ENCODE measurements at regions of chr19 and their contacts with region 1.

Region 1: GRCh38 chr19:51338563-51339312 is 3.2 kb downstream of the VSIG10L start:
- DNase-seq: peak; percentile 90
- ATAC-seq: peak; percentile 72 to 82

Region 2: GRCh38 chr19:51367565-51368365 is 29.0 kb after region 1 on chr19:
- intact Hi-C with region 1: loop called in 1 of 2 experiments (anchors 2 kb)
- DNase-seq: peak; percentile 99
- ATAC-seq: peak; percentile 91 to 93

Region 3: GRCh38 chr19:51393959-51394836 is 55.5 kb after region 1 on chr19:
- intact Hi-C with region 1: loop called in 1 of 2 experiments (anchors 10 kb)
- DNase-seq: peak; percentile 95
- ATAC-seq: peak; percentile 98

Region 4: DNA sequence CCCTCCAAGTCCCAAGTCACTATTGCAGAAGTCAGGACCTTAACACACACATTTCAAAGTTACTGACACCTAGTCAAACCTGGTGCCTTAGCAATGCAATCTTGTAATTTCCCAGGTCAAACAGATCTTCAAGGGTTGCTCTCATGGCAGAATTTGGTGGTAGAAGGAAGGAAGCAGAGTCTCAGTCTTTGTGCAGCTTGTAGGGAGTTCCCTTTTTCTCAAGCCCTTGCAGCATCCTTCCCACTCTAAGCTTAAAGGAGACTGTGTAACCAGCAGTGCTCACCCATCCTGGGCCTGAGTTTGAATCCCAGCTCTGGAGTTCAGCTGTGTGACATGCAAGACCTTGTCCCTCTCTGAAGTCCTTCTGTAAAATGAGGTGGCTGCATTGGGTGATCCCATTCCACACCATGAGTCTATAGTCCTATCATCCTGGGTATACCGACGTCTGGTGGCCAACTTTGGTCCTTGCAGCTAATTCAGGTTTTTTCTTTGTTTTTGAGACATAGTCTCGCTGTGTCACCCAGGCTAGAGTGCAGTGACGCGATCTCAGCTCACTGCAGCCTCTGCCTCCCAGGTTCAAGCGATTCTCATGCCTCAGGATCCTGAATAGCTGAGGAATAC is 68.9 kb after region 1 on chr19:
- intact Hi-C with region 1: loop called in 1 of 2 experiments (anchors 10 kb)
- DNase-seq: no peak
- ATAC-seq: peak in 1 of 2 donors; percentile 60

Region 5: GRCh38 chr19:51480590-51480989 is 141.9 kb after region 1 on chr19:
- intact Hi-C with region 1: no loop called
- DNase-seq: no peak
- ATAC-seq: no peak

Region 6: DNA sequence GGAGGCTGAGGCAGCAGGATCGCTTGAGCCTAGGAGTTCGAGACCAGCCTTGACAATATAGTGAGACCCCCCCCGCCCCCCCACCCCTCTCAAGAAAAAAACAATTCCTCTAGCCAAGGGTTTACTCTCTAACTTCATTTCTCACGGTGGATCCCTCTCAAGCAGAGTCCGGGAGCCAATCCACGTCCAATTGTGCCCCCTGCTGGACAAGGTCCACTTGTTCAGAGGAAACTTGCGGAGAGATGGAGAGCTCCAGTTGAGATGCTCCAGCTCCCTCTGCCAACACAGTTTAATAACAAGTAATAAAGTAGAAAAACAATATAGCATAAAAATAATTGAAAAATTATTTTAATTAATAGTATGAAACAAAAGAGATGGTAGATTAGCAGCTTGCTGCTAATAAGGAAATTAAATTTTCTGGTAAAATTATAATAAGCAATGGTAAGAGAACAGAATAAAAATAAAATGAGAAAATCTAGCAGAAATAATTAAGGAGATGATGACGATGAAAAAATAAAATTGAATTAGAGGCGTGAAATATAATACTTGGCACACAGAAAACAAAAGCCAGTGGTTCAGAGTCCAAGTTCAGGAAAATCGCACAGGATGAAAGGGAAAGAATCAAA is 322.4 kb after region 1 on chr19:
- intact Hi-C with region 1: loop called in 1 of 2 experiments (anchors 2 kb)
- DNase-seq: peak; percentile 78
- ATAC-seq: peak in 1 of 2 donors; percentile 67

Measured in left cardiac atrium (tissue), 4 donors.